PC-3 (cell line): ENCODE measurements at regions of chr19 and their contacts with region 1.

Region 1: GRCh38 chr19:54137086-54137921 is at the start of gene CNOT3:
- DNase-seq: peak; percentile 100
- ATAC-seq: peak; percentile 80
- H3K4me3 ChIP-seq: peak within 1 kb of the TSS; percentile 86
- H3K27ac ChIP-seq: peak within 1 kb of the TSS; percentile 79
- H3K4me1 ChIP-seq: peaks cover 20% of the 10 kb centered on the region; the same call in 1 of the 2 replicates
- H3K27me3 ChIP-seq: no peaks in the 10 kb centered on the region
- CTCF ChIP-seq: no peak
- total RNA-seq, gene CNOT3: 41.1 and 60.2 TPM in 2 replicates

Region 2: GRCh38 chr19:52189735-52190486 is 1947.4 kb before region 1 on chr19 and contains the start of gene PPP2R1A:
- CTCF ChIA-PET with region 1: no interaction called
- POLR2A ChIA-PET with region 1: interaction called, 22 read pairs
- intact Hi-C with region 1: no loop called
- DNase-seq: peak; percentile 100
- ATAC-seq: peak; percentile 91
- H3K4me3 ChIP-seq: peak within 1 kb of the TSS; percentile 86
- H3K27ac ChIP-seq: peak within 1 kb of the TSS; percentile 86
- H3K4me1 ChIP-seq: peaks cover 18% of the 10 kb centered on the region
- H3K27me3 ChIP-seq: no peaks in the 10 kb centered on the region
- CTCF ChIP-seq: no peak
- total RNA-seq, gene PPP2R1A: 336 and 427 TPM in 2 replicates

Region 3: GRCh38 chr19:54115109-54116063 is 21.9 kb before region 1 on chr19 and contains the starts of genes PRPF31 and TFPT:
- CTCF ChIA-PET with region 1: no interaction called
- POLR2A ChIA-PET with region 1: interaction called, 25 read pairs
- intact Hi-C with region 1: loop called (anchors 1 kb)
- DNase-seq: peak; percentile 99
- ATAC-seq: peak; percentile 92
- H3K4me3 ChIP-seq: peak within 1 kb of the TSS; percentile 74
- H3K27ac ChIP-seq: peak within 1 kb of the TSS; percentile 19; the same call in 1 of the 2 replicates
- H3K4me1 ChIP-seq: peaks cover 10% of the 10 kb centered on the region
- H3K27me3 ChIP-seq: no peaks in the 10 kb centered on the region
- CTCF ChIP-seq: no peak
- total RNA-seq, gene PRPF31: 170 and 196 TPM in 2 replicates
- total RNA-seq, gene TFPT: 55.4 and 74.2 TPM in 2 replicates

Region 4: DNA sequence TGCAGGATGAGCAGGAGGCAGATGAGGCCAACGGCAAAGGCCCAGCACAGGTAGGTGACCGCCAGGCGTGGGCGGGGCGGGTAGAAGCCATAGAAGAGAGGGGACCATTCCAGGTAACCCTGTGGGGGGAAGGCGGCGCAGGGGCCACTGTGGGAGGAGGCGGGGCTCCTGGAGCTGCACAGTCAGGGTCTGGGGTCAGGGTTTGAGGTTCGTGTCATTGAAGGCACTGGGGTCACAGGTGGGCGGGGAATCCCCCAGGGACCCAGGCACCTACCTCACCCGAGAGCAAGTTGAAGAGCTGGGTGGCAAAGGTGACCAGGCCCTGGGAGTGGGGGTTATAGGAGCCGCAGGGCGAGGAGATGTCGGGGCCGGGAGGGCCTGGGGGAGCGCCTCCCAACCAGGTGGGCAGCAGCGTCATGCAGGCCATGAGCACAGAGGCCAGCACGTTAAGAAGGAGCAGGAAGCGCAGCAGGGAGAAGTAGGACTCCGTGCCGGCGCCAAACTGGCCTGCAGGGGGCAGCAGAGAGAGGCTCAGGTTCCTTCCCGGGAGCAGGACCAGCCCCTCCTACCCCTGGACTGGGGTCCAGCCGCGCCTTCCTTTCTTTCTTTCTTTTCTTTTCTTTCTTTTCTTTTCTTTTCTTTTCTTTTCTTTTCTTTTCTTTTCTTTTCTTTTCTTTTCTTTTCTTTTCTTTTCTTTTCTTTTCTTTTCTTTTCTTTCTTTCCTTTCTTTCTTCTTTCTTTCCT is 31.0 kb after region 1 on chr19:
- CTCF ChIA-PET with region 1: no interaction called
- POLR2A ChIA-PET with region 1: interaction called, 15 read pairs
- intact Hi-C with region 1: no loop called
- DNase-seq: peak; percentile 95
- ATAC-seq: peak; percentile 61
- H3K4me3 ChIP-seq: no peak overlapping the region
- H3K27ac ChIP-seq: no peak overlapping the region
- H3K4me1 ChIP-seq: peaks cover 12% of the 10 kb centered on the region
- H3K27me3 ChIP-seq: no peaks in the 10 kb centered on the region
- CTCF ChIP-seq: peak; percentile 76

Region 5: GRCh38 chr19:54203151-54203611 is 65.9 kb after region 1 on chr19:
- CTCF ChIA-PET with region 1: no interaction called
- POLR2A ChIA-PET with region 1: interaction called, 22 read pairs
- intact Hi-C with region 1: no loop called
- DNase-seq: peak; percentile 46
- ATAC-seq: peak; percentile 29
- H3K4me3 ChIP-seq: peak overlapping the region; percentile 96
- H3K27ac ChIP-seq: no peak overlapping the region
- H3K4me1 ChIP-seq: peaks cover 48% of the 10 kb centered on the region
- H3K27me3 ChIP-seq: no peaks in the 10 kb centered on the region
- CTCF ChIP-seq: no peak

Region 6: DNA sequence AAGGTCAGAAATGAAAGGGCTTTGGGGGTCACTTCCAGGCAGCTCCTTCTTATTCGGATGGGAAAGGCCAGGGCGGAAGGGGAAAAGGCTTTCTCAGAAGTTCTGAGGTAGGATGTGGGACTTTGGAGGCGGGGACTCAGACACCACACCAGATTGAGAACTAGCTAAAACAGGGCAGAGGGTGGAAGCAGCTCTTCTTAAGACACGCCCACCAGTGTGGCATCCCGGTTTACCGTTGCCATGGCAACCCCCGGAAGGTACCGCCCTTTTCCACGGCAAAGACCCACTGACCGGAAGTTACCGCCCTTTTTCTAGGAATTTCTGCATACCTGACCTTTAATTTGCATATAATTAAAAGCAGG is 179.4 kb after region 1 on chr19:
- CTCF ChIA-PET with region 1: no interaction called
- POLR2A ChIA-PET with region 1: no interaction called
- intact Hi-C with region 1: no loop called
- DNase-seq: no peak
- ATAC-seq: no peak
- H3K4me3 ChIP-seq: no peak overlapping the region
- H3K27ac ChIP-seq: no peak overlapping the region
- H3K4me1 ChIP-seq: no peaks in the 10 kb centered on the region
- H3K27me3 ChIP-seq: peaks cover 93% of the 10 kb centered on the region
- CTCF ChIP-seq: no peak